GM12878 (cell line): ENCODE measurements at regions of chr6 and their contacts with region 1.

Region 1: GRCh38 chr6:12363651-12364381 is 73.7 kb downstream of the EDN1 start:
- DNase-seq: peak; percentile 95
- ATAC-seq: peak; percentile 88
- H3K4me3 ChIP-seq: no peak overlapping the region
- H3K27ac ChIP-seq: peak overlapping the region; percentile 70
- H3K4me1 ChIP-seq: peaks cover 38% of the 10 kb centered on the region
- H3K27me3 ChIP-seq: no peaks in the 10 kb centered on the region
- CTCF ChIP-seq: no peak
- EP300 ChIP-seq: peak; percentile 84 to 93
- POLR2A ChIP-seq: no peak
- RAD21 ChIP-seq: 0 out of 2 replicates have a peak, but pooled peaks have one; percentile 6

Region 2: GRCh38 chr6:12343440-12344162 is 20.2 kb before region 1 on chr6:
- CTCF ChIA-PET with region 1: interaction called, 8 read pairs
- POLR2A ChIA-PET with region 1: interaction called, 10 read pairs
- RAD21 ChIA-PET with region 1: interaction called, 13 read pairs
- SMC1A ChIA-PET with region 1: interaction called, 13 read pairs
- in situ Hi-C with region 1: no loop called
- intact Hi-C with region 1: no loop called
- DNase-seq: no peak
- ATAC-seq: no peak
- H3K4me3 ChIP-seq: no peak overlapping the region
- H3K27ac ChIP-seq: no peak overlapping the region
- H3K4me1 ChIP-seq: no peaks in the 10 kb centered on the region
- H3K27me3 ChIP-seq: no peaks in the 10 kb centered on the region
- CTCF ChIP-seq: no peak
- EP300 ChIP-seq: no peak
- POLR2A ChIP-seq: no peak
- RAD21 ChIP-seq: no peak

Region 3: GRCh38 chr6:12348530-12349511 is 15.0 kb before region 1 on chr6:
- CTCF ChIA-PET with region 1: interaction called, 78 read pairs
- POLR2A ChIA-PET with region 1: interaction called, 10 read pairs
- RAD21 ChIA-PET with region 1: interaction called, 13 read pairs
- SMC1A ChIA-PET with region 1: interaction called, 160 read pairs
- in situ Hi-C with region 1: no loop called
- intact Hi-C with region 1: no loop called
- DNase-seq: no peak
- ATAC-seq: no peak; the same call in 1 of the 3 replicates
- H3K4me3 ChIP-seq: no peak overlapping the region
- H3K27ac ChIP-seq: no peak overlapping the region
- H3K4me1 ChIP-seq: no peaks in the 10 kb centered on the region
- H3K27me3 ChIP-seq: no peaks in the 10 kb centered on the region
- CTCF ChIP-seq: no peak
- EP300 ChIP-seq: no peak
- POLR2A ChIP-seq: no peak
- RAD21 ChIP-seq: no peak

Region 4: GRCh38 chr6:12383448-12383847 is 19.6 kb after region 1 on chr6:
- CTCF ChIA-PET with region 1: interaction called, 12 read pairs
- POLR2A ChIA-PET with region 1: interaction called, 3 read pairs
- RAD21 ChIA-PET with region 1: interaction called, 30 read pairs
- SMC1A ChIA-PET with region 1: interaction called, 99 read pairs
- in situ Hi-C with region 1: no loop called
- intact Hi-C with region 1: loop called (anchors 2 kb)
- DNase-seq: peak; percentile 72
- ATAC-seq: peak; percentile 98
- H3K4me3 ChIP-seq: no peak overlapping the region
- H3K27ac ChIP-seq: no peak overlapping the region
- H3K4me1 ChIP-seq: peaks cover 11% of the 10 kb centered on the region
- H3K27me3 ChIP-seq: no peaks in the 10 kb centered on the region
- CTCF ChIP-seq: no peak
- EP300 ChIP-seq: peak; percentile 65 to 72; a peak in 2 of 4 replicates
- POLR2A ChIP-seq: no peak
- RAD21 ChIP-seq: no peak

Region 5: GRCh38 chr6:14117158-14118090 is 1753.6 kb after region 1 on chr6 and contains the start of gene CD83:
- CTCF ChIA-PET with region 1: no interaction called
- POLR2A ChIA-PET with region 1: no interaction called
- RAD21 ChIA-PET with region 1: no interaction called
- SMC1A ChIA-PET with region 1: no interaction called
- in situ Hi-C with region 1: loop called (anchors 25 kb)
- intact Hi-C with region 1: no loop called
- DNase-seq: no peak
- ATAC-seq: peak; percentile 68
- H3K4me3 ChIP-seq: peak within 1 kb of the TSS; percentile 93
- H3K27ac ChIP-seq: peak within 1 kb of the TSS; percentile 78
- H3K4me1 ChIP-seq: peaks cover 14% of the 10 kb centered on the region
- H3K27me3 ChIP-seq: no peaks in the 10 kb centered on the region
- CTCF ChIP-seq: peak in 2 of 3 experiments; percentile 11 to 34; a peak in 2 of 6 replicates
- EP300 ChIP-seq: peak in 1 of 2 experiments; percentile 42; a peak in 1 of 4 replicates
- POLR2A ChIP-seq: peak; percentile 100
- RAD21 ChIP-seq: peak; percentile 35
- polyA plus RNA-seq, gene CD83: 120 to 174 TPM